T-cell (primary cell): ENCODE measurements at regions of chr12 and their contacts with region 1.

Region 1: DNA sequence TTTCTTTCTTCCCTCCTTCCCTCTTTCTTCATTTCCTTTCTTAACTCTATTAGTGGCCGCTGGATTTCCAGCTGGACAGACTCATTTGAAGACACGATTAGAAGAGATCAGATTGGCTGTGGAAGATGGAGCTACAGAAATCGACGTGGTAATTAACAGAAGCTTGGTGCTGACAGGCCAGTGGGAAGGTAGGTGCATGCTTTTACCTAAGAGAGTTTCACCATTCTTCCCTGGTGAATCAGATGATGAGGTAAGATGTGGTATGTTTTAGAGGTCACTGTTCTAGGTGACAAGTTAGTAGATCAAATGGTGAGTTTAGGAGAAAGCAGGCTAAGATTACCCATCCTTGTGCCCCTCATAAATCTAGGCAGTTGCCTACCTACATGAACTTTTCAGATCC is 51.6 kb downstream of the DERA start:
- DNase-seq: no peak
- ATAC-seq: no peak
- H3K4me3 ChIP-seq: no peak overlapping the region
- H3K4me3 Mint-ChIP-seq: no peak overlapping the region
- H3K27ac ChIP-seq: no peak overlapping the region
- H3K27ac Mint-ChIP-seq: no peak overlapping the region
- H3K4me1 ChIP-seq: no peaks in the 10 kb centered on the region
- H3K4me1 Mint-ChIP-seq: no peaks in the 10 kb centered on the region
- H3K27me3 ChIP-seq: no peaks in the 10 kb centered on the region
- H3K27me3 Mint-ChIP-seq: no peaks in the 10 kb centered on the region

Region 2: GRCh38 chr12:15939111-15939510 is 23.6 kb before region 1 on chr12:
- CTCF ChIA-PET with region 1: interaction called in 1 of 2 experiments, 18 read pairs
- POLR2A ChIA-PET with region 1: no interaction called
- DNase-seq: no peak
- ATAC-seq: no peak
- H3K4me3 ChIP-seq: no peak overlapping the region
- H3K4me3 Mint-ChIP-seq: no peak overlapping the region
- H3K27ac ChIP-seq: no peak overlapping the region
- H3K27ac Mint-ChIP-seq: no peak overlapping the region
- H3K4me1 ChIP-seq: no peaks in the 10 kb centered on the region
- H3K4me1 Mint-ChIP-seq: peaks cover 3 to 10% (median 7%) of the 10 kb centered on the region in 3 donors
- H3K27me3 ChIP-seq: no peaks in the 10 kb centered on the region
- H3K27me3 Mint-ChIP-seq: no peaks in the 10 kb centered on the region

Region 3: DNA sequence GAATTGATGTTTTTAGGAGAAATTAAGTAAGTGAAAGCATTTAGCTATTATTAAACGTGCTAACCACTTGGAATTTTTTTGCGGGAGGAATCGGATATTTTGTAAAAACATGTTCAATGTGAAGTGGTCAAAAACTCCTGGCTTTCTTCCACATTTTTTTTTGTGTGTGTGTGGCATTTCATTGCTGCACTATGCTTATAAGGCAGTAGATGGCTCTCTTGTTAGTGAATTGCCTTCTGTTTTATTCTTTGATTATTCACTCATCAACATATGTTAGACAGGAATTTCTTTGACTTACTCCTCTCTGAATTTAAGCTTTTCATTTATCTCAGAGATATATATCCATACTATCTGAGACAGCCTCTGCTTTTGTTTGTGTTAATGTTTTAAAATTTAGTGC is 19.7 kb after region 1 on chr12:
- CTCF ChIA-PET with region 1: no interaction called
- POLR2A ChIA-PET with region 1: interaction called in 1 of 2 experiments, 15 read pairs
- DNase-seq: no peak
- ATAC-seq: no peak
- H3K4me3 ChIP-seq: no peak overlapping the region
- H3K4me3 Mint-ChIP-seq: no peak overlapping the region
- H3K27ac ChIP-seq: no peak overlapping the region
- H3K27ac Mint-ChIP-seq: no peak overlapping the region
- H3K4me1 ChIP-seq: no peaks in the 10 kb centered on the region
- H3K4me1 Mint-ChIP-seq: no peaks in the 10 kb centered on the region
- H3K27me3 ChIP-seq: no peaks in the 10 kb centered on the region
- H3K27me3 Mint-ChIP-seq: no peaks in the 10 kb centered on the region